Ascending aorta (tissue), 2 donors: ENCODE measurements at regions of chr12 and their contacts with region 1.

Region 1: GRCh38 chr12:39443081-39443928 is at the start of gene KIF21A:
- DNase-seq: peak; percentile 58 to 94
- H3K4me3 ChIP-seq: peak within 1 kb of the TSS; percentile 88 to 90
- H3K27ac ChIP-seq: peak within 1 kb of the TSS; percentile 77 to 80
- H3K4me1 ChIP-seq: no peaks in the 10 kb centered on the region
- H3K27me3 ChIP-seq: no peaks in the 10 kb centered on the region
- CTCF ChIP-seq: peak; percentile 41 to 89 (median 52)
- total RNA-seq, gene KIF21A: 1.3 TPM

Region 2: GRCh38 chr12:38316391-38317129 is 1126.7 kb before region 1 on chr12 and contains the start of gene ALG10B:
- intact Hi-C with region 1: loop called (anchors 5 kb)
- DNase-seq: peak; percentile 77 to 97
- H3K4me3 ChIP-seq: peak within 1 kb of the TSS; percentile 35 to 78
- H3K27ac ChIP-seq: peak within 1 kb of the TSS; percentile 73 to 82
- H3K4me1 ChIP-seq: peaks cover 0 to 5% of the 10 kb centered on the region in 2 donors
- H3K27me3 ChIP-seq: no peaks in the 10 kb centered on the region
- CTCF ChIP-seq: peak in 2 of 3 experiments; percentile 60 to 71
- total RNA-seq, gene ALG10B: 9.2 TPM

Region 3: GRCh38 chr12:38906482-38907170 is 536.7 kb before region 1 on chr12:
- intact Hi-C with region 1: loop called (anchors 2 kb)
- DNase-seq: peak; percentile 19 to 93
- H3K4me3 ChIP-seq: peak overlapping the region; percentile 55 to 94
- H3K27ac ChIP-seq: peak overlapping the region; percentile 98 to 99
- H3K4me1 ChIP-seq: peaks cover 4 to 7% of the 10 kb centered on the region in 2 donors
- H3K27me3 ChIP-seq: no peaks in the 10 kb centered on the region
- CTCF ChIP-seq: peak; percentile 74 to 93 (median 90)

Region 4: GRCh38 chr12:39619660-39620433 is 176.5 kb after region 1 on chr12 and contains the start of gene ABCD2:
- intact Hi-C with region 1: loop called (anchors 5 kb)
- DNase-seq: peak; percentile 10 to 80
- H3K4me3 ChIP-seq: peak within 1 kb of the TSS; percentile 59 to 74
- H3K27ac ChIP-seq: peak within 1 kb of the TSS; percentile 68 to 71
- H3K4me1 ChIP-seq: peaks cover 0 to 3% of the 10 kb centered on the region in 2 donors
- H3K27me3 ChIP-seq: no peaks in the 10 kb centered on the region
- CTCF ChIP-seq: no peak
- total RNA-seq, gene ABCD2: under 0.01 TPM

Region 5: DNA sequence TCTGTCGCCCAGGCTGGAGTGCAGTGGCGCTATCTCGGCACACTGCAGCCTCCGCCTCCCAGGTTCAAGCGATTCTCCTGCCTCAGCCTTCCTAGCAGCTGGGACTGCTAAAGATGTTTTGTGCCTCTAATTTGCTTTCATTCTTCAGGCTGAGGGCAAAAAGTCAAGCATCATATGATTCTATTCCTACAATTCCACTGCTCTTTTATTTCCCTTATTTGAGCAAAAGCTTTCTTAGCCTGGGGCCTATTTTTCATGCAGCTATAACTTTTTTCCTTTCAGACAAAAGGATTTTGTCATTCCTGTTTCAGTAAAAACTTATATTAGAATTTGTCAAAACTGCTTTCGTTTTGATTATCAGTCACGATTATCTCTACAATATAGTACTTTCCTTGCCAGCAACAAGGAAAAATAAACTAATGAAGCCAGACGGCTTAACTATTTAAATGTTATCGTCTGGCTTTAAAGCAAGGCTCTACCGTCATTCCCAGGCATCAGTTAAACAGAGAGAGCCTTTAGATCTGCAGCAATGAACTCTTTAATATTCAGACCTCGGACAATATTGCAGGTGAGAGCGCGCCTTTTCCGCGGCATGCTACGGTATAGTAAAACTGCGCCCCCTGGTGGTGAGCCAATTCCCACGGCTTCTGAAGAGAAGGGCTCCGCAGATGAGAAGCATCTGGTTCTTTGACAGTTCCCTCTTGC is 663.9 kb after region 1 on chr12:
- intact Hi-C with region 1: loop called (anchors 5 kb)
- DNase-seq: peak; percentile 63 to 94
- H3K4me3 ChIP-seq: peak overlapping the region; percentile 45 to 96
- H3K27ac ChIP-seq: peak overlapping the region; percentile 86 to 90
- H3K4me1 ChIP-seq: peaks cover 0 to 10% of the 10 kb centered on the region in 2 donors
- H3K27me3 ChIP-seq: no peaks in the 10 kb centered on the region
- CTCF ChIP-seq: peak; percentile 71 to 91 (median 77)

Region 6: DNA sequence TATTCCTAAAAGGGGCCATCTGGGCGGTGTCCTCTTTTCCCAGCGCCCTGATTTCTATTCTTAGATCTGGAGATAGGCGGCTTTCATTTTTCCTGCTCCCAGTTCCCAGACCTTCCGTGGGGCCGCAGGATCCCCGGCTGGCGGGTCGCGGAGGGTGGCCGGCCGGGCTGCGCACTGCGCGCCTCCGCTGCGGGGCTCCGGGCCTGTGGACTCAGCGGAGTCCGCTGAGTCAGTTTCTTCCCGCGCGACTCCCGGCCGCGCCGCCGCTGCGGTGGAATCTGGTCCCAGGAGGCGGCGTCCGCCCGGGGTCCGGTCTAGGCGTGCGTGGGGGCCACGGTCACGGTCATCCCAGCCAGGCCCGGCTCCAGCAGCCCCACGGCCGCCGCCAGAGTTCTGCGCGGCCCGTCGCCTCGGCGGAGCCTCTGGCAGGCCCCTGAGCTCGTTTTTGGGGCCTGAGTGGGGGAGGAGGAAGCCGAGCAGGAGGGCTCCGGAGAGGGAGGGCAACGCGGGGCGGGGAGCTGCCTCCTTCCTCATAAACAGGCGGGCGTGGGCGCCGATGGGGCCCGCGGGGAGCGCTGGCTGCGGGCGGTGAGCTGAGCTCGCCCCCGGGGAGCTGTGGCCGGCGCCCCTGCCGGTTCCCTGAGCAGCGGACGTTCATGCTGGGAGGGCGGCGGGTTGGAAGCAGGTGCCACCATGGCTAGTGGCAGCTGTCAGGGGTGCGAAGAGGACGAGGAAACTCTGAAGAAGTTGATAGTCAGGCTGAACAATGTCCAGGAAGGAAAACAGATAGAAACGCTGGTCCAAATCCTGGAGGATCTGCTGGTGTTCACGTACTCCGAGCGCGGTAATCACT is 781.4 kb after region 1 on chr12 and contains the start of gene LRRK2:
- intact Hi-C with region 1: loop called (anchors 5 kb)
- DNase-seq: peak; percentile 49 to 92
- H3K4me3 ChIP-seq: peak within 1 kb of the TSS; percentile 69 to 82
- H3K27ac ChIP-seq: peak within 1 kb of the TSS; percentile 90 to 94
- H3K4me1 ChIP-seq: peaks cover 2 to 6% of the 10 kb centered on the region in 2 donors
- H3K27me3 ChIP-seq: no peaks in the 10 kb centered on the region
- CTCF ChIP-seq: peak in 1 of 3 experiments; percentile 15
- total RNA-seq, gene LRRK2: 14.3 TPM